ENCODE measurements at regions of chr6 and their contacts with region 1.

Region 1: GRCh38 chr6:1418471-1419191 is 29.3 kb downstream of the FOXF2 start:
- DNase-seq: no peak
- H3K4me3 Mint-ChIP-seq: no peak overlapping the region
- H3K27ac Mint-ChIP-seq: no peak overlapping the region
- H3K4me1 Mint-ChIP-seq: no peaks in the 10 kb centered on the region
- H3K27me3 Mint-ChIP-seq: peaks cover 13% of the 10 kb centered on the region

Region 2: GRCh38 chr6:2514965-2515555 is 1096.4 kb after region 1 on chr6:
- CTCF ChIA-PET with region 1: no interaction called
- POLR2A ChIA-PET with region 1: no interaction called
- intact Hi-C with region 1: loop called (anchors 5 kb)
- DNase-seq: no peak
- H3K4me3 Mint-ChIP-seq: no peak overlapping the region
- H3K27ac Mint-ChIP-seq: no peak overlapping the region
- H3K4me1 Mint-ChIP-seq: no peaks in the 10 kb centered on the region
- H3K27me3 Mint-ChIP-seq: peaks cover 14% of the 10 kb centered on the region

Measured in activated CD4-positive, alpha-beta memory T cell treated with anti-CD3 and anti-CD28 coated beads for 36 hours (primary cell).